CD8-positive, alpha-beta T cell (primary cell): ENCODE measurements at regions of chr2 and their contacts with region 1.

Region 1: DNA sequence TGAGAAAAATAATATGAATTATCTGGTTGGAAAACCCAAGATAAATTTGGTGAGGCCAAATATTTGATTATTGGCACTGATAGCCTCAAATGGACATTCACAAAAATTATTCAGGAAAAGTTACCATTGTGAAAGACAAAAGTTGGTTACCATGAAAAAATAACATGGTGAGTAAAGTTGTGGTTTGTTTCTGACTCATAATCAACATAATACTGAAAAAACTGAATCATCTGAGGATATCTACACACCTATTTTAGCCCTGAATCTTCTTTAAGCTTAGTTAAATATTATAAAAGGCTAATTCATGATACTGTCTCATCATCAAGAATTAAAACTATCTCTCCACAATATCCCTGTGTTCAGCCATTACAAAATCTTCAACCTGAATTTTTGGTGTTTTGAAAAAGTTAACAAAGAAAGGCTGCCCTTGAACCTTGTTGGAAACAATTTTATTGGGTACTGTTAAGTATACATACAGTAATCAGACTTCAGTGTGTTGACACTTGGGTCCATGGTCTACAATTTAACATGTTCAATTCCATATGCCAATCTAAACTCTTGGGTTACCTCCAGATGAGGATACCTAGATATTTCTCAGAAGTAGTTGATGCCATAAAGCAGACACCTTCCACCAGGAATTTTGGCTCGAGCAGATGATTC is 607.5 kb upstream of the SLC39A10 start:
- DNase-seq: no peak
- ATAC-seq: no peak
- H3K4me3 ChIP-seq: no peak overlapping the region
- H3K4me3 Mint-ChIP-seq: no peak overlapping the region
- H3K27ac ChIP-seq: no peak overlapping the region
- H3K27ac Mint-ChIP-seq: no peak overlapping the region
- H3K4me1 ChIP-seq: no peaks in the 10 kb centered on the region
- H3K4me1 Mint-ChIP-seq: no peaks in the 10 kb centered on the region
- H3K27me3 ChIP-seq: no peaks in the 10 kb centered on the region
- H3K27me3 Mint-ChIP-seq: no peaks in the 10 kb centered on the region
- CTCF ChIP-seq: no peak

Region 2: GRCh38 chr2:195021711-195022507 is 27.6 kb before region 1 on chr2:
- CTCF ChIA-PET with region 1: no interaction called
- POLR2A ChIA-PET with region 1: no interaction called
- intact Hi-C with region 1: loop called in 1 of 2 experiments (anchors 1 kb)
- DNase-seq: no peak
- ATAC-seq: no peak
- H3K4me3 ChIP-seq: no peak overlapping the region
- H3K4me3 Mint-ChIP-seq: no peak overlapping the region
- H3K27ac ChIP-seq: no peak overlapping the region
- H3K27ac Mint-ChIP-seq: no peak overlapping the region
- H3K4me1 ChIP-seq: no peaks in the 10 kb centered on the region
- H3K4me1 Mint-ChIP-seq: no peaks in the 10 kb centered on the region
- H3K27me3 ChIP-seq: no peaks in the 10 kb centered on the region
- H3K27me3 Mint-ChIP-seq: no peaks in the 10 kb centered on the region
- CTCF ChIP-seq: no peak

Region 3: GRCh38 chr2:195212586-195212985 is 163.1 kb after region 1 on chr2:
- CTCF ChIA-PET with region 1: no interaction called
- POLR2A ChIA-PET with region 1: no interaction called
- intact Hi-C with region 1: no loop called
- DNase-seq: no peak
- ATAC-seq: no peak
- H3K4me3 ChIP-seq: no peak overlapping the region
- H3K4me3 Mint-ChIP-seq: no peak overlapping the region
- H3K27ac ChIP-seq: no peak overlapping the region
- H3K27ac Mint-ChIP-seq: no peak overlapping the region
- H3K4me1 ChIP-seq: no peaks in the 10 kb centered on the region
- H3K4me1 Mint-ChIP-seq: no peaks in the 10 kb centered on the region
- H3K27me3 ChIP-seq: no peaks in the 10 kb centered on the region
- H3K27me3 Mint-ChIP-seq: no peaks in the 10 kb centered on the region
- CTCF ChIP-seq: no peak